KBM-7 (cell line): ENCODE measurements at regions of chr2 and their contacts with region 1.

Region 1: DNA sequence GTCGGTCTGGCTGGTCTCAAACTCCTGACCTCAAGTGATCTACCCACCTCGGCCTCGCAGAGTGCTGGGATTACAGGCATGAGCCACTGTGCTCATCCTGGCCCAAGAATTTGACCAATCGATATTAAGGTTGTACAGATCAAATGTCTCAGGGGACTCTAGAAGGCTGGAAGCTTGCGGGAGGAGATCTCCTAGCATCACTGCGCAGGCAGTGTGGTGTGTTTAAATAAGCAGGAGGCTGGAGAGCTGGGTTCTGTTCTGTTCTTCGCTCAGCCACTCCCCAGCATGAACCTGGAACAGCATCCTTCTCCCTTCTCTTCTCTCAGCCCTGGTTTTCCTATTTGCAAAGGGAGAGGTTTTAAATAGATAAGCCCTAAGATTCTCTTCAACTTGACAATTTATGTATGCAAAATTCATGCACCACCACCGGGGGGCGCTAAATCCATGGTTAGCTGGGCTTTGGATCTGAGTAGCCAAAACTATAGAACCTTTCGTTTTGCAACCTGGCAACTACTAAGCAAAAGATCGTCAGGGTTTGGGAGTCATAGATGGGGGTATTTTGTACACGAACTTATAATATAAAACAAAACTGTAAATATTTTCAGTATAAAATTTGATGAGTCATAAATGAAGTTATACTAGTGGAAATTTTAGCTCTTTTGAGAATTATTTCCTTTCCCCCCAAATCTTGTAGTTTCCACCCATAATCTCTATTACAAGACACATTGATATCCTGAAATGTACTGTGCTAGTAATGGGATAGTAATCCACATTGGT is 60.6 kb downstream of the SLC16A14 start:
- DNase-seq: peak; percentile 70

Region 2: DNA sequence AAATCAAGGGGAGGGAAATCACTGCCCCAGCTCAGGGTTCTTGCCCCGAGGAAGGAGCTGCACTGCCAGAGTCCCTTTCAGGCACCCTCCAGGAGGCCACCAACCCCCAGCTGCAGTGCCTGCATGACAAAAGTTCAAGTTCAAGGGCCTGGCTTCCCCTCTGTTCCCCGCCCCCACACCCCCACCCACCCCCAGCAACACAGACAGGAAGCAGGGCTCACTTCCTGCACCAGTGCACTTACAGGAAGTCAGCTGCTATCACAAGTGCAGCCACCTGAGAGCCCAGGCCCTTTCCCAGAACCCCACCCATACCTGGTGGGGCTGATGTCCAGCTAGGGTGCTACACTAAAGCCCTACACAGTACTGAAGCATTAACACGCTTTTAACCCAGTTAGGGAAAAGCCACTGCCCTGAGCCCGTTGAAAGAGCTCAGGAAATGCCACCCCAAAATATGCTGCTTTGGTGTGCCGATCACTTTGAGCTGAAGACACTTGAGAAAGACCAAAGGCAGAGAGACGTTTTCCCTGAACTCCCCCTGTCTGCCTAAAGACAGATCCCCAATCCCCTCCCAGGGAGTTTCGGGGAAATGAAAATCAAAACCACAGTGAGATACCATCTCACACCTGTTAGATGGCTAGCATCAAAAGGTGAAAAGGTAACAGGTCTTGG is 594.6 kb after region 1 on chr2:
- in situ Hi-C with region 1: loop called (anchors 25 kb)
- DNase-seq: peak; percentile 45